ENCODE measurements at regions of chr12 and their contacts with region 1.

Region 1: DNA sequence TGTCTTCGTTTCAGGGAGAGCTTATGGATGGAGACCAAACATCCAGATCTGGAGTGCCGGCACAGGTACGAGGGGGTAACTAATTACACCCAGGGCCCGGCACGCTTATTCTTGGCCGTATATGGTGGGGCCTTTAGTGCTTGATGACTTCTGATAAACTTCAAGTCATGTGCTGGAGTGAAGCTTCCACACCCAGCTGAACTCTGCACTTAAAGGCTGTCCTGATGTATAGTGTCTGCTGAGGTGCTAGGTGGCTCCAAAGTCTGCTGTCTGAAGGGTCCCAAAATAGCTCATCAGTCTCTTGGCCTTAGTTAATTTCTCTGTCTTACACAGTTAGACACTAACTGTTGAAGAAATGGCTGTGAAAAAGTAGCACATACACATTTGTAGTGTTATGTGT is 17.9 kb downstream of the RNF34 start:
- DNase-seq: no peak
- ATAC-seq: no peak
- H3K4me3 ChIP-seq: no peak overlapping the region
- H3K27ac ChIP-seq: no peak overlapping the region
- H3K4me1 ChIP-seq: no peaks in the 10 kb centered on the region
- H3K27me3 ChIP-seq: no peaks in the 10 kb centered on the region
- CTCF ChIP-seq: no peak

Region 2: GRCh38 chr12:121345151-121345815 is 72.6 kb before region 1 on chr12:
- CTCF ChIA-PET with region 1: interaction called, 3 read pairs
- POLR2A ChIA-PET with region 1: interaction called, 12 read pairs
- in situ Hi-C with region 1: no loop called
- intact Hi-C with region 1: no loop called
- DNase-seq: no peak
- ATAC-seq: no peak
- H3K4me3 ChIP-seq: no peak overlapping the region
- H3K27ac ChIP-seq: no peak overlapping the region
- H3K4me1 ChIP-seq: peaks cover 3% of the 10 kb centered on the region; the same call in 1 of the 2 replicates
- H3K27me3 ChIP-seq: no peaks in the 10 kb centered on the region
- CTCF ChIP-seq: no peak

Region 3: DNA sequence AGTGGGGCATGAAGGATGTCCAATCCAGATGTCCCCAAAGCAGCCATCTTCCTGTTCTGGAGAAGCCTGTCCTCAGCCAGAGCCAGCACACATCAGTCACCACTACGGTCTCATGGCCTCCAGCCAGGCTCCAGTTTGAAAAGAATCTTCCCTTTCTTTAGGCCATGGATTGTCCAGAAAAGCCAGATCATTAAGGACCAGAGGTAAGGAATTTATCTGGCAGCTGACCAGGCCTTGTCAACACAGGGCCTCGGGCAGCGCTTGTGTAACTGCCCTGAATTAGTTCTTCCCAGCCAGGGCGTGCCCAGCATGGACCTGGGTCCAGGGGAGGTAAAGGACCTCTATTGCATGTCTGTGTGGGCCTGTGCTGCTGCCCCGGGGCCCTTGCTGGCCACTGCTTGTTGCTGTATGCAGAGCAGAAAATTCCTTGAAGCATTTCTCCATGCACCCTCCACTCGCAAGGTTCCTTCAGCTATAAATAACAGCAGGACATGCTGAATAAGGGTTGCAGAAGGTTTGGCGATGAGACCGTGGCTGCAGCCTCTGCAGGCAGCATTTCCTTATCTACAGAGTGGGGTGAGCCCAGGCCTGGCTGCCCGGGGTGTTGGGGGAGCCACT is 1499.8 kb after region 1 on chr12:
- CTCF ChIA-PET with region 1: no interaction called
- POLR2A ChIA-PET with region 1: no interaction called
- in situ Hi-C with region 1: no loop called
- intact Hi-C with region 1: no loop called
- DNase-seq: no peak
- ATAC-seq: peak; percentile 72
- H3K4me3 ChIP-seq: no peak overlapping the region
- H3K27ac ChIP-seq: peak overlapping the region; percentile 77
- H3K4me1 ChIP-seq: peaks cover 35% of the 10 kb centered on the region
- H3K27me3 ChIP-seq: no peaks in the 10 kb centered on the region
- CTCF ChIP-seq: no peak